ENCODE measurements at regions of chr12 and their contacts with region 1.

Region 1: DNA sequence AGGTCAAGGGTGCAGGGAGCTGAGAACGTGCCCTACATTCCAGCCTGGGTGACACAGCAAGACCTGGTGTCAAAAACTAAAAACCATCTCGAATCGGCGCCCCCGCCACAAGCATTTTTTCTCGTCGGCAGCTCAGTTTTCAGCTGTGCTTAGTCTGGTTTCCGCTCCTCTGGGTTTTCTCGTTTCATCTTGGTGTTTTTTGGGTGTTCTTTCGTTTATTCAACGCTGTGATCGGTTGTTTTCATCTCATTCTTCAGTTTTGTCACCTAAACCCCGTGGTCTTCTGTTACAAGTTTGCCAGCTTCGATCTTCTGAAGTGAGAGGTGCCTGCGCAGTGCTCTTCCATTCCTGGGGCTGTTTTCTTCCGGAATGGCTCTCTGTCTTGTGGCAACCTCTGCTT is 41.4 kb downstream of the NOC4L start:
- DNase-seq: no peak
- H3K4me3 ChIP-seq: no peak overlapping the region
- H3K27ac ChIP-seq: no peak overlapping the region
- H3K4me1 ChIP-seq: no peaks in the 10 kb centered on the region
- H3K27me3 ChIP-seq: peaks cover 96% of the 10 kb centered on the region
- CTCF ChIP-seq: no peak

Region 2: DNA sequence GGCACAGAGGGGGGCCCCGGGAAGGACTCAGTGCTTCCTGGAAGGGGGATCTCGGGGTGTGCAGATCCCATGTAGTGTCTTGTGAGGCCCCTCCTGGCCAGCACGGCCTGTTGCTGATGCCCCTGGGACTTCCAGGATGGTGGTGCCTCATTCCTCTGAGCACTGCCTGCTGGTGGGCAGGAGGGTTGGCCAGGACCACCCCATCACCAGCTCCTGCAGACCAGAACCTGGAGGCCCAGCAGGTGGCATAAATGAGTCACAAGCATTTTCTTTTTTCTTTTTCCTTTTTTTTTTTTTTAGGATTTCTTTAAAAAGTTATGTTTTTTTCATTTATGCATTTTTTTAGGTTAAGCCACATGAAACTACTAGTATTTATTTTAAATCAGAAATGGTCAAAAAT is 349.5 kb before region 1 on chr12:
- CTCF ChIA-PET with region 1: no interaction called
- POLR2A ChIA-PET with region 1: no interaction called
- intact Hi-C with region 1: no loop called
- DNase-seq: no peak
- H3K4me3 ChIP-seq: no peak overlapping the region
- H3K27ac ChIP-seq: no peak overlapping the region
- H3K4me1 ChIP-seq: peaks cover 17% of the 10 kb centered on the region; the same call in 1 of the 2 replicates
- H3K27me3 ChIP-seq: no peaks in the 10 kb centered on the region
- CTCF ChIP-seq: peak; percentile 56; the same call in 1 of the 2 replicates

Region 3: GRCh38 chr12:132205271-132206045 is 19.8 kb after region 1 on chr12:
- CTCF ChIA-PET with region 1: interaction called, 13 read pairs
- POLR2A ChIA-PET with region 1: no interaction called
- intact Hi-C with region 1: no loop called
- DNase-seq: no peak
- H3K4me3 ChIP-seq: no peak overlapping the region
- H3K27ac ChIP-seq: no peak overlapping the region
- H3K4me1 ChIP-seq: no peaks in the 10 kb centered on the region
- H3K27me3 ChIP-seq: peaks cover 99% of the 10 kb centered on the region
- CTCF ChIP-seq: no peak

Region 4: GRCh38 chr12:132483612-132484011 is 297.9 kb after region 1 on chr12:
- CTCF ChIA-PET with region 1: no interaction called
- POLR2A ChIA-PET with region 1: interaction called, 16 read pairs
- intact Hi-C with region 1: no loop called
- DNase-seq: no peak
- H3K4me3 ChIP-seq: no peak overlapping the region
- H3K27ac ChIP-seq: no peak overlapping the region
- H3K4me1 ChIP-seq: no peaks in the 10 kb centered on the region
- H3K27me3 ChIP-seq: peaks cover 94% of the 10 kb centered on the region
- CTCF ChIP-seq: no peak